Activated naive CD4-positive, alpha-beta T cell treated with anti-CD3 and anti-CD28 coated beads for 36 hours (primary cell): ENCODE measurements at regions of chr12 and their contacts with region 1.

Region 1: GRCh38 chr12:47812797-47813510 is 6.7 kb downstream of the HDAC7 start:
- DNase-seq: peak; percentile 99
- H3K4me3 Mint-ChIP-seq: peak overlapping the region; percentile 88
- H3K27ac Mint-ChIP-seq: peak overlapping the region; percentile 98
- H3K4me1 Mint-ChIP-seq: peaks cover 75% of the 10 kb centered on the region
- H3K27me3 Mint-ChIP-seq: no peaks in the 10 kb centered on the region

Region 2: DNA sequence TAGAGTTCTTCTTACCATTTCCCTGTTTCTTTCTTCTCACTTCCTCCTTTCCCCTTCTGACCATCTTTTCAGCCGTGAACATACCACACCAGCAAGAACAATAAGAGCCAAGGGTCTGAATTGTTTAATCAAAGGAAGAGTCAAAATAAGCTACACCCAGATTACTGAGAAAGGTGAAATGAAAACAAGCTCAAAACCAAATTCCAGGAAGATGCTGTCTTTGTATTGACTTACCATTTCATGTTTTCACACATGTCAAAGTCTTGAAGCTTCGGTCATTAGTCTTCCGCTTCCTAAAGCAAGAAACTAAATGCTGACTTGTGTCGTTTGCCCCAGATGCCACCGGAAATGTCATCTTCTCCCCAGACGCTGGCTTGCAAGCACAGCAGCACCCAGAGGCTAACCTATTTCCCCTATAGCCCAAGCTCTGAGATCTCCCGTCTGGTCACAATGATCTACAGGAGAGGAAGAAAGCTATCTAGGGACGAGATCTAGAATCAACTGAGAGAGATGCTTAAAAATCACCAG is 596.7 kb before region 1 on chr12:
- CTCF ChIA-PET with region 1: no interaction called
- intact Hi-C with region 1: loop called (anchors 2 kb)
- DNase-seq: peak; percentile 83
- H3K4me3 Mint-ChIP-seq: peak overlapping the region; percentile 94
- H3K27ac Mint-ChIP-seq: peak overlapping the region; percentile 100
- H3K4me1 Mint-ChIP-seq: peaks cover 12% of the 10 kb centered on the region
- H3K27me3 Mint-ChIP-seq: no peaks in the 10 kb centered on the region

Region 3: DNA sequence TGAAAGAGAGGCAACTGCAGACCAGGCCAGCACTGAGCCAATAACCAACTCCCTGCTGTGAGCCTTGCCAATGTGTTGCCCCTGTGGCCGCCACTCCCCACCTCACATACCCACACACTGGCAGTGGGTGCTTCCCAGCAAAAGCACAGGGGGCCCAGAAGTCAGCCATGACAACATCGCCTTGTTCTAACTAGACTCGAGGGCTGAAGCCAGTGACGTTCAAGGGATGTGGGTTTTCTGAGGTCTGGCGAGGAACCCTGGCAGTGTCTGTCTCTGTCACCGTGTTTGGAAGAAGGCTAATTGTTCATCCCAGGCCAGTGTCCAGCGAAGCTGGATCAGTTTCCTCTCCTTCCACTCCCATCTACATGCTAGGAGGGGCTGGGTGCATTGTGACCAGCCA is 421.4 kb before region 1 on chr12:
- CTCF ChIA-PET with region 1: no interaction called
- intact Hi-C with region 1: loop called (anchors 2 kb)
- DNase-seq: peak; percentile 88
- H3K4me3 Mint-ChIP-seq: peak overlapping the region; percentile 77
- H3K27ac Mint-ChIP-seq: peak overlapping the region; percentile 100
- H3K4me1 Mint-ChIP-seq: peaks cover 90% of the 10 kb centered on the region
- H3K27me3 Mint-ChIP-seq: no peaks in the 10 kb centered on the region

Region 4: GRCh38 chr12:47473091-47473490 is 339.9 kb before region 1 on chr12:
- CTCF ChIA-PET with region 1: no interaction called
- intact Hi-C with region 1: no loop called
- DNase-seq: no peak
- H3K4me3 Mint-ChIP-seq: no peak overlapping the region
- H3K27ac Mint-ChIP-seq: peak overlapping the region; percentile 51
- H3K4me1 Mint-ChIP-seq: peaks cover 29% of the 10 kb centered on the region
- H3K27me3 Mint-ChIP-seq: no peaks in the 10 kb centered on the region

Region 5: DNA sequence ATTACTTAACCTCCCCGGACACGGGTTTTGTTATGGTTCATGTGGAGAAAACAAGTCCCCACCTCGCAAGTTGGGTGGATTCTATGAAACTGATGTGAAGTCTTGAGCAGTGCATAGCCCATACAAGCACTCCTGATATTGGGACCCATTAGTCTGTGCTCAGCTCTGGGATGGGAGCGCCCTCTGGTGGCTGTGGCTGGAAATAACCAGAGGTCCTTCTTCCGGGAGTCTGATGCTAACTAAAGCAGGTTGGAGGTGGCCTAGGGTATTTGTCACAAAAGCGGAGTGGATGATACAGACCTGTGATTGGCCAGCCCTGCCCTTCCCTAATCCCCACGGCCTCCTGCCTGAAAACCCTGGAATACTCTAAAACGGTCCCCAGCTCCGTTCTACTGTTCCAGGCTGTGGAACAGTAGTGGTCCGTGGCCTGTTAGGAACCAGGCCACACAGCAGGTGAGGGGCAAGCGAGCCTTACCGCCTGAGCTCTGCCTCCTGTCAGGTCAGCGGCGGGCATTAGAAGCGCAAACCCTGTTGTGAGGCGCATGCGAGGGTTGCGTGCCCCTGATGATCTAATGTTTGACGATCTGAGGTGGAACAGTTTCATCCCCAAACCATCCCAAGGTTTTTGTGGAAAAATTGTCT is 33.5 kb before region 1 on chr12:
- CTCF ChIA-PET with region 1: interaction called, 10 read pairs
- intact Hi-C with region 1: no loop called
- DNase-seq: peak; percentile 97
- H3K4me3 Mint-ChIP-seq: no peak overlapping the region
- H3K27ac Mint-ChIP-seq: peak overlapping the region; percentile 18
- H3K4me1 Mint-ChIP-seq: peaks cover 30% of the 10 kb centered on the region
- H3K27me3 Mint-ChIP-seq: no peaks in the 10 kb centered on the region

Region 6: GRCh38 chr12:47860279-47860841 is 47.4 kb after region 1 on chr12:
- CTCF ChIA-PET with region 1: no interaction called
- intact Hi-C with region 1: loop called (anchors 1 kb)
- DNase-seq: peak; percentile 69
- H3K4me3 Mint-ChIP-seq: peak overlapping the region; percentile 13
- H3K27ac Mint-ChIP-seq: peak overlapping the region; percentile 92
- H3K4me1 Mint-ChIP-seq: peaks cover 44% of the 10 kb centered on the region
- H3K27me3 Mint-ChIP-seq: no peaks in the 10 kb centered on the region

Region 7: DNA sequence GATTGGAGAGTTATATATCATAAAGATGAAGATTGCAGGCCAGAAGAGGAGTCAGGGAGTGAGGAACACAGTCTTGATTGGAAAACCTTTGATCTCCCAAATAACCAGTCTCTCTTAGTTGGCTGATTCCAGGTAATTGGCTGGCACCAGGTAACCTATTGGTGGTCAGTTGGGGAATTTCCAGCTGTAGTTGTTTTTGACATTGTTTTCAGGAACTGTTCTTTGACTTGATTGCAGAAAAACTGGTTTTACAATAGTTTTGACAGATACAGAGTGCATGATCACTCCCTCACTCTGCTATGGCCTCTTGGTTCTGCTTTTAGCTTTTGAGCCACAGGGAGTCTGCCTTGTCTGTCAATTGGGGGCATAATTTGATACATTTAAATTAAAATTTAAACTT is 466.1 kb after region 1 on chr12:
- CTCF ChIA-PET with region 1: no interaction called
- intact Hi-C with region 1: no loop called
- DNase-seq: no peak
- H3K4me3 Mint-ChIP-seq: no peak overlapping the region
- H3K27ac Mint-ChIP-seq: no peak overlapping the region
- H3K4me1 Mint-ChIP-seq: no peaks in the 10 kb centered on the region
- H3K27me3 Mint-ChIP-seq: peaks cover 2% of the 10 kb centered on the region